WTC11 (cell line): ENCODE measurements at regions of chr6 and their contacts with region 1.

Region 1: GRCh38 chr6:44268095-44268628 is 2.1 kb upstream of the TMEM151B start:
- DNase-seq: peak; percentile 86
- ATAC-seq: peak; percentile 34
- H3K4me3 Mint-ChIP-seq: 0 out of 2 replicates have a peak overlapping the region, but pooled peaks have one; percentile 3
- H3K27ac Mint-ChIP-seq: no peak overlapping the region
- H3K4me1 Mint-ChIP-seq: peaks cover 48% of the 10 kb centered on the region
- H3K27me3 Mint-ChIP-seq: peaks cover 31% of the 10 kb centered on the region
- CTCF ChIP-seq: peak; percentile 89

Region 2: GRCh38 chr6:44291841-44292240 is 23.7 kb after region 1 on chr6:
- CTCF ChIA-PET with region 1: interaction called, 37 read pairs
- POLR2A ChIA-PET with region 1: no interaction called
- DNase-seq: no peak
- ATAC-seq: no peak
- H3K4me3 Mint-ChIP-seq: no peak overlapping the region
- H3K27ac Mint-ChIP-seq: no peak overlapping the region
- H3K4me1 Mint-ChIP-seq: peaks cover 5% of the 10 kb centered on the region
- H3K27me3 Mint-ChIP-seq: peaks cover 48% of the 10 kb centered on the region
- CTCF ChIP-seq: no peak

Region 3: GRCh38 chr6:44297063-44298038 is 29.2 kb after region 1 on chr6:
- CTCF ChIA-PET with region 1: interaction called, 37 read pairs
- POLR2A ChIA-PET with region 1: interaction called, 3 read pairs
- DNase-seq: peak; percentile 67
- ATAC-seq: peak; percentile 62
- H3K4me3 Mint-ChIP-seq: peak overlapping the region; percentile 66
- H3K27ac Mint-ChIP-seq: no peak overlapping the region
- H3K4me1 Mint-ChIP-seq: peaks cover 11% of the 10 kb centered on the region
- H3K27me3 Mint-ChIP-seq: peaks cover 42% of the 10 kb centered on the region
- CTCF ChIP-seq: no peak

Region 4: GRCh38 chr6:44338228-44339122 is 70.3 kb after region 1 on chr6:
- CTCF ChIA-PET with region 1: interaction called, 67 read pairs
- POLR2A ChIA-PET with region 1: interaction called, 3 read pairs
- DNase-seq: peak; percentile 78
- ATAC-seq: peak; percentile 89
- H3K4me3 Mint-ChIP-seq: no peak overlapping the region
- H3K27ac Mint-ChIP-seq: no peak overlapping the region
- H3K4me1 Mint-ChIP-seq: peaks cover 28% of the 10 kb centered on the region
- H3K27me3 Mint-ChIP-seq: peaks cover 16% of the 10 kb centered on the region
- CTCF ChIP-seq: peak; percentile 61